GM13977 (cell line): ENCODE measurements at regions of chr15 and their contacts with region 1.

Region 1: DNA sequence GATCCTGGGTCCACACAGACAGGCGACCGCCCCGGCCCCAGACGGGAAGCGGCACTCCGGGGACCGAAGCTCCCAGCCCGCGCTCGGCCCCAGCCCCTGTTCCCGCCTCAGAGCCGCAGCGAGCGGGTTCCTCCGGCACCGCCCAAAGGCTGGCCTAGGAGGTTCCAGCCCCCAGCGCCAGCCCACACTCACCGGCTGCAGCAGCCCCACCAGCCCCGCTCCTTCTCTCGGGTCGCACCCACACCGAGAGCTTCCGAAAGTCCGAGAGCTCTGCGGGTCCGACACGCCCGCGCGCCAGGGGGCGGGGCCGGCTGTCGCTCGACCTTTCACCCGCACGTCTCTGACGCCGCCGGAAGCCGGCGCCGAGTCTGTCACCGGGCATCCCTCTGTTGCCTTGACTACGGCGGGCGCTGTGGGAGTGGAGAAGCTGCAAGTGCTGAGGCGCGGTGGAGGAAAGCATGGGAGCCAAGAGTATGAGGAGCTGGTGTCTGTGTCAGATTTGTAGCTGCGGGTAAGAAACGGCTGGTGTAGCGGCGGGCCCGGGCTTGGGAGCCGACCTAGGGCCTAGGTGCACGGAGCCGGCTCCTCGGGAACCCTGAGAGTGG is at the starts of genes EFL1 and SAXO2:
- DNase-seq: peak; percentile 94
- CTCF ChIP-seq: no peak

Region 2: DNA sequence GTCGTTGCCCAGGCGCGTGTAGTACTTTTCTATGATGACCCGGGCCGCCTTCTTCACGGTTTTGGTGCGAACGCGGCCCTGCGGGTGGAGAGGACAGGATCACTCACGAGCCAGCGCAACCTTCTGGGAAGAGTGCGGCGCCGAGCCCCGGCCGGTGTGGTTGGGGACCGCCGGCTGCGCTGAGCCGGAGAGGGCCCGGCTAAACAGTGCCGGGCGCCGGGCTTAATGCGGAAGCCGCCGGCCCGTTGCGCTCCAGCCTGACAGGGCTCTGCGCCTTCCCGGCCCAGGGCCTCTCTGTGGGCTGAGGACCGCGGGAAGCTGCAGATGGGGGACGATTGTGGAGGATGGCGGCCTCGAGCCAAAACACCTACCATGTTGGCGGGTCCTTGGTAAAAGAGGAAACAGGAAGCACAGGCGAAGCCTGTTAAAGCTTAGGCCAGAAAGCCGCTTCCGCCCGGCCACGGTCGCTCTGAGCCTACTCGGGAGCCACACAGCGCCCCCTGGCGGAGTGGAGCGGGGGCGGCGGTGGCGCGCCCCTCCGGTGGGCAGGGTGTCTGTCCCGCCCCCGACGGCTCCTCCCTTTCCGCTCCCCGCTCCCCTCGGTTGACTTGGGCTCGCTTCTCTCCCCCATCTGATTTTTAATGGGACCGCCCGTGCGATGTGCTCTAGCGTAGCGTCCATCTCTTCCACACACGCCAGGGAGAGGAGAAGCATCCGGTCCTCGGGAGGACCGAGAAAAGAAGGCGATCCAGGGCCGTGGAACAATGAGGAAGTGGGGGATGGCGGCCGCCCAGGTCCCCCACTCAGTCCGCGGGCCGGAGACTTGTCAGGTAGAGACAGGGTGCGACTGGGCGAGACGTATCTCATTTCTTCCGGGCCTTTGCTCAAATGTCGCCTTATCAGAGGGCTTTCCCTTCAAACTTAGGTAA is 277.8 kb after region 1 on chr15 and contains the start of gene RPS17:
- in situ Hi-C with region 1: loop called (anchors 25 kb)
- DNase-seq: peak; percentile 99
- CTCF ChIP-seq: peak; percentile 94

Region 3: DNA sequence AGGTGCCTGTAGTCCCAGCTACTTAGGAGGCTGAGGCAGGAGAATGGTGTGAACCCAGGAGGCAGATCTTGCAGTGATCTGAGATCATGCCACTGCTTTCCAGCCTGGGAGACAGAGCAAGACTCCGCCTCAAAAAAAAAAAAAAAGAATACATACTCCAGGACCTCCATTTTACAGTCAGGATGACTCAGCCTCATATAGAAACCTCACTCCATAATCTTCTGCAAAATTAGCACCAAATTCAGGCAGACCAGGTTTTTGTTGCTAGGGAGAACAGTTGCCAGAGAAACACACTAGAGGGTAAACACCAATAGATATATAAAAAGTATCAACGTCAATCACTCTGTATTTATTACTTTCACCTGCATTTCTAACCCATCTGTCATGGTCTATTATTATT is 475.5 kb after region 1 on chr15:
- in situ Hi-C with region 1: no loop called
- DNase-seq: no peak
- CTCF ChIP-seq: no peak